ENCODE measurements at regions of chr21 and their contacts with region 1.

Region 1: GRCh38 chr21:39313571-39314142 is at the start of gene BRWD1:
- DNase-seq: peak; percentile 79
- H3K4me3 ChIP-seq: peak within 1 kb of the TSS; percentile 91
- H3K27ac ChIP-seq: peak within 1 kb of the TSS; percentile 96
- H3K4me1 ChIP-seq: peaks cover 3% of the 10 kb centered on the region
- H3K27me3 ChIP-seq: no peaks in the 10 kb centered on the region
- CTCF ChIP-seq: no peak
- total RNA-seq, gene BRWD1: 38.6 to 43.1 TPM

Region 2: DNA sequence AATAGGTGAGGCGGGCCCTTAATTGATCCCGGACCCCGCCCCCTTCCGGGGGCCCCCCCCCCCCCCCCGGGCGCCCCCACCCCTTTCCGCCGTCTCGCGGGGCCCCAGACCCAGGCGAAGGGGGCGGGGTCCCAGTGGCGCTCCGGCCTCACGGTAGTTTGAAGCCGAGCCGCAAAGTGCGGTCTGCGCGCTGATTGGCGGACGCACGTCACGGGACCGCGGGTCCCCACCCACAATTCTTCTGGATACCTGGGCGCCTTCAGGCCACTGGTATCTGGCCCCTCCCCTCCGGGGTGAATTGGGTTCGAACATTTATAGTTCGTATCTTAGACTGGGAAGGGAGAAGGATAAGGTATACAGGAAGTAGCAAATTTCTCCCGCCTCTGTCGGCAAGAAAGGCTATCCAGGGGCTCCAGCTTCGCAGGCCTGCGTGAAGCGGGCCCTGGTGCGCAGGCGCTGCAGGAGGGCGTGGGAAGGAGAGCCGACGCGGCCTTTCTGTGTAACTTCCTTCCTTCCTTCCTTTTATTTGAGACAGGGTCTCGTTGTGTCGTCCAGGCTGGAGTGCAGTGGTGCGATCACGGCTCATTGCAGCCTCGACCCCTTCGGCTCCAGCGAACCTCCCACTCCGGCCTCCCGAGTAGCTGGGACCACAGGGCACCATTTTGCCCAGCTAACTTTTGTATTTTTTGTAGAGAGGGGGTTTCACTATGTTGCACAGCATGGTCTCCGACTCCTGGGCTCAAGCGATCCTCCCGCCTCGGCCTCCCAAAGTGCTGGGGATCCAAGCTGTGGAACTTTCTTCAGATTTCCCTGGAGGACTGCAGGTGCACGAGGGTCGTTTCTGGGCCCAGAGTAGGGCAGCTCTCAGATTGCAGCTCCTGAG is 35.8 kb after region 1 on chr21:
- intact Hi-C with region 1: loop called (anchors 5 kb)
- DNase-seq: peak; percentile 99
- H3K4me3 ChIP-seq: peak overlapping the region; percentile 56
- H3K27ac ChIP-seq: peak overlapping the region; percentile 97
- H3K4me1 ChIP-seq: peaks cover 5% of the 10 kb centered on the region
- H3K27me3 ChIP-seq: no peaks in the 10 kb centered on the region
- CTCF ChIP-seq: no peak

Region 3: DNA sequence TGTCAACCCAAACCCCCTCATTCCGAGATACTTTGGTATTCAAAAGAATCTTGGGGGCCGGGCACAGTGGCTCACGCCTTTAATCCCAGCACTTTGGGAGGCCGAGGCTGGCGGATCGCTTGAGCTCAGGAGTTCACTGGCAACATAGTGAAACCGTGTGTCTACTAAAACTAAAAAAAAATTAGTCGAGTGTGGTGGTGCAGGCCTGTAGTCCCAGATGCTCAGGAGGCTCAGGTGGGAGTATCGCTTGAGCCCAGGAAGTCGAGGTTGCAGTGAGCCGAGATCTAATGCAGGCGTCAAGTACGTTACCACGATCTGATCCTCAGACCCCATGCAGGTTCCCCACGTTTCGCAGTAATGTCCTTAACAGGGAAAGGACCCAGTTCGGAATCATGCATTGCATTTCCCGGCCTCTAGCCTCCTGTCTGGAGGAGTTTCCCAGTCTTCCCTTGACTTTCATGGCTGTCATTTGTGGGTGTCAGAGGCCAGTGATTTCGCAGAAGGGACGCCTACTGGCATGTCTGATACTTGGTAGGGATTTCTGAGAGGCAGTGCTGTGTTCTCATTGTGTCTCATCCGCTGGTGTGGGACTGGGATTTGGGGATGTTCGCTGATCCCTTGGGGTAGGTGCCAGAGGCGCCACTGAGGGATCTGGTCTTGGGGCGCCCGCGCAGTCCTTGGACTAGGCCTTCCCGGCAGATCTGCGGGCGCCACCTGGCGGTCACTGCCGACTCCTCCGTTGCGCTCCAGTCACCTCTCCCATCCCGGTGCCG is 74.6 kb after region 1 on chr21:
- intact Hi-C with region 1: loop called (anchors 5 kb)
- DNase-seq: peak; percentile 96
- H3K4me3 ChIP-seq: peak overlapping the region; percentile 36
- H3K27ac ChIP-seq: peak overlapping the region; percentile 58
- H3K4me1 ChIP-seq: peaks cover 3% of the 10 kb centered on the region
- H3K27me3 ChIP-seq: no peaks in the 10 kb centered on the region
- CTCF ChIP-seq: peak; percentile 95

Region 4: DNA sequence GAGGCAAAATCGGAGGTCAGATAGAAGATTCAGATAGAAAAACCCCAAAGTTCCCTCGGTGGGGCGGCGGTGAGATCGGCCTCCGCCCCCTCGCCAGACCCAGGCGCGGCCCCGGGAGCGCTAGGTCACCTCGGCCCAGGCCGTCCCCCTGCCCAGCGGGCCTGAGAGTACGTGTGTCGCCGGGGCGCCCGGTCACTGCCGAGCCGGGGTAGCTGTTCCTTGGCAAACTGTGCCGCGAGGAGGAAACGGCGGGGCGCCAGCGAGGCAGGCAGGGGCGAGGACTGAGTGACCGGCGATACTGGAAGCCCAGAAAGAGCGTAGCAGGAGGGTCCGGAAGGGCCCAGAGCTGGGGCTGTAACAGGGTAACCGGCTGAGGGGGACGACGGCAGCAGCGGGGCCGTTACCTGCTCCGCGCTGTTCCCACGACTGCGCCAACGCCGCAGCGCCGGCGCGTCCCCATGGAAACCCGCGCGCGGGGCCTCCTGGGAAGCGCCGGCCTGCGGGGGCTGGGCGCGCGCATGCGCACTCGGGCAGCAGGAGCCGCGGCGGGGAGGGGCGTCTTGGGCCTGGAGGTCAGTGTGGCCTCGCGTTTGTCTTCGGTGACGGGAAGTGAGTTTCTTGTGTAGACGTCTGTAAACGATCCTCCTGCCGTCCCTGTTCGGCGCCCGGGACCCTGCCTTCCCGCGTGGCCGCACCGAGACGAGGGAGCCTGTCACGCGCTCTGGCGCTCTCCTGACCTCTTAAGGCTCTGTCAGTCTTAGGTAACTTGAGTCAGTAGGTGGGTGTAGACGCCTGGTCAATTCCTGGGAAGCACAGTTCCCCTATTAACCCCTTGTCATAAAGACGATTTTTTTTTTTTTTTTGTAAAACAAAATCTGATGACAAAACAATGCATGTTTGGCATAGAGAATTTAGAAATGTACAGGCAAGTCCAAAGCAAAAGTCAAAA is 131.9 kb after region 1 on chr21 and contains the start of gene LCA5L:
- intact Hi-C with region 1: loop called (anchors 5 kb)
- DNase-seq: peak; percentile 89
- H3K4me3 ChIP-seq: peak within 1 kb of the TSS; percentile 88
- H3K27ac ChIP-seq: peak within 1 kb of the TSS; percentile 74
- H3K4me1 ChIP-seq: no peaks in the 10 kb centered on the region
- H3K27me3 ChIP-seq: no peaks in the 10 kb centered on the region
- CTCF ChIP-seq: no peak
- total RNA-seq, gene LCA5L: 0.64 to 0.98 TPM

Region 5: GRCh38 chr21:39502631-39503030 is 189.0 kb after region 1 on chr21:
- intact Hi-C with region 1: no loop called
- DNase-seq: no peak
- H3K4me3 ChIP-seq: no peak overlapping the region
- H3K27ac ChIP-seq: no peak overlapping the region
- H3K4me1 ChIP-seq: no peaks in the 10 kb centered on the region
- H3K27me3 ChIP-seq: no peaks in the 10 kb centered on the region
- CTCF ChIP-seq: no peak

Measured in colonic mucosa (tissue), 4 donors.